Right ventricle myocardium inferior (tissue), 1 donor: ENCODE measurements at regions of chr19 and their contacts with region 1.

Region 1: DNA sequence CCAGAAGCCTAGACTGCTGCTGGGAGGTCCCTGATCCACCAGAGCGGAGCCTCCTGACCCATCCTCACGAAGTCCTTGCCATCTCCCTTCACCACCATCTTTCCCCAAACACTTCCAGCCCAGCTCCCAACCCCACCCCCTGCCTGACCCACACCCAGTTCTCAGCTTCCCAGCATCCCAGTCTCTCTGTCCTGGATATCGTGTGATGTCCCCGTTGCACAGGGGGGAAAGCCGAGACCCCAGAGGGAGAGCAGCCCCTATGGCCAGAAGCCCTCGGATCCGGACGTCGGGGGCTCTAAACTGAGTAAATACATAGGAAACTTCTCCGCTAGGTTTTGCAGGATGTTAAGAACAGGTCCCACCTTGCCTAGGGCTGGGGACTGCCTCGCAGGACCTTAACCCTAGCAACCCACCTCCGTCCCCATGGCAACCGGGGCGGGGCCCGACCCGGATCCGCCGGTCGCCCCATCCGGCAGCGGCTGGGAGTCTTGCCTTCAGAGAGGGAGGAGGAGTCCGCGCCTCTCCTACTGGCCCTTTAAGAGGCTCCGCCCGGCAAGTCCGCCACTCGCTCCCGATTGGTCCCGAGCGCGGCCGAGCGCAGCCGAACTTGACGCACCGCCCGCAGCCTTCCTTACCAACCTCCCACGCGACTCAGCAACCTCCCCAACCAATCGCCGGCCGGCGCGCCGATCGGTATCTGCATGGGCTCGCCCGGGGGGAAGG is 451 bp upstream of the HMG20B start:
- DNase-seq: peak; percentile 100
- ATAC-seq: peak; percentile 98

Region 2: GRCh38 chr19:3505598-3506383 is 66.5 kb before region 1 on chr19 and contains the start of gene FZR1:
- intact Hi-C with region 1: loop called (anchors 2 kb)
- DNase-seq: peak; percentile 99
- ATAC-seq: peak; percentile 98
- total RNA-seq, gene FZR1: 19.4 TPM

Region 3: GRCh38 chr19:3516675-3517207 is 55.6 kb before region 1 on chr19:
- intact Hi-C with region 1: no loop called
- DNase-seq: no peak
- ATAC-seq: no peak

Region 4: GRCh38 chr19:3557461-3558248 is 14.6 kb before region 1 on chr19 and contains the start of gene MFSD12:
- intact Hi-C with region 1: loop called (anchors 2 kb)
- DNase-seq: peak; percentile 97
- ATAC-seq: peak; percentile 98
- total RNA-seq, gene MFSD12: 23.7 TPM

Region 5: GRCh38 chr19:3687774-3688706 is 115.7 kb after region 1 on chr19:
- intact Hi-C with region 1: no loop called
- DNase-seq: no peak
- ATAC-seq: no peak